Heart left ventricle (tissue), 16 donors: ENCODE measurements at regions of chr15 and their contacts with region 1.

Region 1: GRCh38 chr15:27059610-27060202 is 88.7 kb downstream of the GABRG3 start:
- DNase-seq: no peak
- ATAC-seq: peak in 2 of 4 donors; percentile 26 to 60
- H3K4me3 ChIP-seq: no peak overlapping the region
- H3K27ac ChIP-seq: no peak overlapping the region
- H3K4me1 ChIP-seq: no peaks in the 10 kb centered on the region
- H3K27me3 ChIP-seq: peaks cover 0 to 4% (median 0%) of the 10 kb centered on the region in 9 donors
- CTCF ChIP-seq: peak; percentile 27 to 71 (median 56)
- POLR2A ChIP-seq: no peak

Region 2: DNA sequence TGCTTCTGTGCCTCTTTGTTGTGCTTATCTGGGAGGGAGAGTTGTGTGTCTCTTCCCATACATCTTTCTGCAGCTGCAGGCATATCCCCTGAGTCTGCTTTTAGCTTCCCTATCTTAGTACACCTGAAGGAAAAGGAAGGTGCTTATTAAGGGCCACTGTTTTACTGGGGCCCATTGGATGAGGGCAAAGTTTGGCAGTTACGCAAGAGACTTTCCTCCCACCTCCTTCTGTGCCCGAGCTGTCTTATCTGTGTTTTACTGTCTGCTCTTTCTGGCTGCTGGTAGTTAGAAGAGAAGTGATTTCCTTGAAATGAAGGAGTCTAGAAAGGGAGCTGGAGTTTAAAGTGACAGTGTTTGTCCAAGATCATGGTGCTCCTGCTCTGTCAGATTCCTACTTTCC is 22.2 kb before region 1 on chr15:
- intact Hi-C with region 1: no loop called
- DNase-seq: no peak
- ATAC-seq: no peak
- H3K4me3 ChIP-seq: no peak overlapping the region
- H3K27ac ChIP-seq: no peak overlapping the region
- H3K4me1 ChIP-seq: no peaks in the 10 kb centered on the region
- H3K27me3 ChIP-seq: no peaks in the 10 kb centered on the region
- CTCF ChIP-seq: no peak
- POLR2A ChIP-seq: no peak

Region 3: GRCh38 chr15:27111323-27111722 is 51.6 kb after region 1 on chr15:
- intact Hi-C with region 1: no loop called
- DNase-seq: no peak
- ATAC-seq: no peak
- H3K4me3 ChIP-seq: no peak overlapping the region
- H3K27ac ChIP-seq: no peak overlapping the region
- H3K4me1 ChIP-seq: no peaks in the 10 kb centered on the region
- H3K27me3 ChIP-seq: peaks cover 0 to 2% (median 0%) of the 10 kb centered on the region in 9 donors
- CTCF ChIP-seq: no peak
- POLR2A ChIP-seq: no peak

Region 4: DNA sequence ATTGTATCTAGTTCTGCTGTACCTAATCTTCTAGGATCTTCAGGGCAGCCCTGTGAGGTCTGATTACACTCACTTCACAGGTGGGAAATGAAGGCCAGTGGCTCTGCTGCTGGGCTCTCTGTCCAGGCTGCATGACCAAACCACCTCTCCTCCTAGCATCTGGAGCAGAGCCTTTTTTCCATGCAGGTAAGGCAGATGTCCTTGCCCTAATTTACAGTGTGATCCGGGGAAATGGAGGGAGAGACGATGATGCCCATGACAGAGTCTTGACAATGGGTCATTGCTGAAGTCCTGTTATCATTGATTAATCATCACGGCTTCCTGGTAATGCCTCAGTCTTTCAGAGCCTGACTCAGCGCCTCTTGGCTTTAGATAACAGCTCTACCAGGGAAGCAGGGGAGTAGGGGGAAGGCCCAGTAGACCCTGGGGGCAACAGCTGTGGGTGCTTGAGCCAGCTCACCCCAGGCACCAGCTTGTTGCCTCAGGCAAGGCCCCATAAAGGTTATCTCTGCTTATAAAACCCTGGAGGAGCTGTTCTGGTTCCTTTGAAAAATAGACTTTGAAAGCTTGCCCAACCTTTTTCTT is 64.7 kb after region 1 on chr15:
- intact Hi-C with region 1: loop called in 1 of 10 experiments (anchors 10 kb)
- DNase-seq: no peak
- ATAC-seq: no peak
- H3K4me3 ChIP-seq: no peak overlapping the region
- H3K27ac ChIP-seq: no peak overlapping the region
- H3K4me1 ChIP-seq: no peaks in the 10 kb centered on the region
- H3K27me3 ChIP-seq: no peaks in the 10 kb centered on the region
- CTCF ChIP-seq: no peak
- POLR2A ChIP-seq: no peak

Region 5: GRCh38 chr15:27241943-27242342 is 182.2 kb after region 1 on chr15:
- intact Hi-C with region 1: no loop called
- DNase-seq: no peak
- ATAC-seq: no peak
- H3K4me3 ChIP-seq: no peak overlapping the region
- H3K27ac ChIP-seq: no peak overlapping the region
- H3K4me1 ChIP-seq: peaks cover 0 to 5% (median 0%) of the 10 kb centered on the region in 12 donors
- H3K27me3 ChIP-seq: peaks cover 0 to 3% (median 0%) of the 10 kb centered on the region in 9 donors
- CTCF ChIP-seq: no peak
- POLR2A ChIP-seq: no peak

Region 6: DNA sequence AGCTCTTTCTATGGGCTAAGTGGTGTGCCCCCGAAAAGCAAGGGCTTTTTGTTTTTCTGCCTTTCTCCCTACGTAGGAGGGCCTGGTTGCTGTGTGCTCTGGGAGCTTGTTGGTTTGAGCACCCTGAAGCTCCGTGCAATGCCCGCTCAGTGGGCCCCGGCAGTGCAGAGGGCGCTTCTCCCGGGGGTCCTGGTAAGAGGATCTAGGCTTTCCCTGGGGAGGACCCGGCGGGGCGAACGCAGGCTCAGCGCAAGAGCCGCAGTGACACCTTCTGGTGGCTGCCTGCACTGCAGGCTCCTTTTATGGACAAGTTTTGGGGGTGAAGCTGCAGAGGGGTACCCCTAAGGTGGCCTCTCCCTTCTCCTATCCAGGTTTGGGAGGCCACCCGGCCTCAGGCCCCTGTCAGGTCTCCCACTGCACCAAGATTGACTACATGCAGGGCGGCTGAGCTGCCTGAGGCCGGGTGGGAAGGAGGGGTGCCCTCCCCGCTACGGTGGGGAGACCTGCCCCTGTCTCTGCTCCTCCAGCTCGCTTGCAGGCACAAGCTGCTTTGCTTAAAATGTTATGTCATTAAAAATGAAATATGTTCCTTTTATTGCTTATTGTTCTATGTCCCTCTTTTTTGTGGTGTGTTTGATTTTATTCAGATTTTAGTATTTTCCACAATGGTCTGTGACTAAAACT is 299.2 kb after region 1 on chr15:
- intact Hi-C with region 1: loop called in 7 of 10 experiments (anchors 2 to 10 kb)
- DNase-seq: peak in 2 of 5 donors; percentile 28 to 52
- ATAC-seq: no peak
- H3K4me3 ChIP-seq: no peak overlapping the region
- H3K27ac ChIP-seq: no peak overlapping the region
- H3K4me1 ChIP-seq: no peaks in the 10 kb centered on the region
- H3K27me3 ChIP-seq: peaks cover 0 to 29% (median 0%) of the 10 kb centered on the region in 9 donors
- CTCF ChIP-seq: peak; percentile 36 to 74 (median 57)
- POLR2A ChIP-seq: no peak